ENCODE measurements at regions of chr5 and their contacts with region 1.

Region 1: DNA sequence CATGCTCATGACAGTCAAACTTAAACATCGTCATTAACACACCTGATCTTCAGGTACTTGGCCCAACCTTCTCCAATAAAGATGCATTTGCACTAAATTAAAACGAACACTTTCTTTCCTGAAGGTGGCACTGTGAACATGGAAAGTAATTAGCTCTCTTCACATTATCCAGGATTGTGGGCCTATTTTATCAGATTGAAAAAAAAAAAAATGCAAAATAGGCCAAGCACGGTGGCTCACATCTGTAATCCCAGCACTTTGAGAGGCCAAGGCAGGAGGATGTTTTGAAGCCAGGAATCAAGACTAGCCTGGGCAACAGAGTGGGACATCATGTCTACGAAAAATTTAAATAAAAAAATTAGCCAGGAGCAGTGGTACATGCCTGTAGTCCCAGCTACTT is 14.4 kb upstream of the CDC20B start:
- DNase-seq: no peak
- H3K4me3 ChIP-seq: no peak overlapping the region
- H3K27ac ChIP-seq: no peak overlapping the region
- H3K4me1 ChIP-seq: no peaks in the 10 kb centered on the region
- H3K27me3 ChIP-seq: peaks cover 0 to 6% (median 3%) of the 10 kb centered on the region in 4 experiments; a peak in 3 of 7 replicates
- CTCF ChIP-seq: peak in 1 of 3 experiments; percentile 46; a peak in 2 of 4 replicates
- EP300 ChIP-seq: no peak
- POLR2A ChIP-seq: no peak
- RAD21 ChIP-seq: peak; percentile 44 to 48

Region 2: GRCh38 chr5:55211157-55211839 is 23.9 kb after region 1 on chr5:
- CTCF ChIA-PET with region 1: interaction called, 12 read pairs
- POLR2A ChIA-PET with region 1: no interaction called
- DNase-seq: no peak
- H3K4me3 ChIP-seq: no peak overlapping the region
- H3K27ac ChIP-seq: no peak overlapping the region
- H3K4me1 ChIP-seq: no peaks in the 10 kb centered on the region
- H3K27me3 ChIP-seq: no peaks in the 10 kb centered on the region
- CTCF ChIP-seq: no peak
- EP300 ChIP-seq: no peak
- POLR2A ChIP-seq: no peak
- RAD21 ChIP-seq: no peak

Region 3: GRCh38 chr5:55290991-55291390 is 103.6 kb after region 1 on chr5:
- CTCF ChIA-PET with region 1: no interaction called
- POLR2A ChIA-PET with region 1: no interaction called
- DNase-seq: no peak
- H3K4me3 ChIP-seq: no peak overlapping the region
- H3K27ac ChIP-seq: no peak overlapping the region
- H3K4me1 ChIP-seq: no peaks in the 10 kb centered on the region
- H3K27me3 ChIP-seq: no peaks in the 10 kb centered on the region
- CTCF ChIP-seq: no peak
- EP300 ChIP-seq: no peak
- POLR2A ChIP-seq: no peak
- RAD21 ChIP-seq: no peak

Measured in H1 (cell line).